Activated CD8-positive, alpha-beta T cell treated with anti-CD3 and anti-CD28 coated beads for 36 hours (primary cell): ENCODE measurements at regions of chr7 and their contacts with region 1.

Region 1: DNA sequence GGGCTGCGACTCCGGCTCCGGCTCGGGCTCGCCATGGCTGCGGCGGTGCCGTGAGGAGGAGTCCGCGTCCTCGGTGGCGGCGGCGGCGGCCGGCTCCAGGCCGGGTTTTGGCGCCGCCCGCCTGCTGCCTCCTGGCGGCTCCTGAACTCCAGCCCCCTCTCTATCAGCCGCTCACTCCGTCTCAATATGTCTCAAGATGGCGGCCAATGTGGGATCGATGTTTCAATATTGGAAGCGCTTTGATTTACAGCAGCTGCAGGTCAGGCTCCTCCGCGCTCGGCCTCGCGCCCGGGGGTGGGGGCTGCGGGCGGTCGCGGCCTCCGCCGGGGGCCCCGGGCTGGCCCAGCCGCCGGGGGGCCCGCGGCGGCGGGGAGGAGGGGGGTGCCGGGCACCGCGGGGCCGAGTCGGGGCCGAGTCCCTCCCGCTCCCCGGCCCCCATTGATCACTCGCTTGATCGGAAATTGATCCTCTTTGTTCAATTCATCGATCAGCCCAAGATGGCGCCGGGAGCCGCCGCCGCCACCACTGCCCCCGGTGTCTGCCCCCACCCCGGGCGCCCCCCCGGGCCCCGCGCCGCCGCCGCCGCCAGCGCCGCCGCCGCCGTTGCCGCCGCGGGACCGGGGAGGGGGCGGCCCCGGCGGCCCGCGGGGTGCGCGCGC is 1.5 kb upstream of the CUX1 start:
- DNase-seq: peak; percentile 76
- ATAC-seq: peak; percentile 78
- H3K4me3 Mint-ChIP-seq: peak overlapping the region; percentile 75
- H3K27ac Mint-ChIP-seq: peak overlapping the region; percentile 83
- H3K4me1 Mint-ChIP-seq: peaks cover 24% of the 10 kb centered on the region
- H3K27me3 Mint-ChIP-seq: no peaks in the 10 kb centered on the region
- CTCF ChIP-seq: no peak

Region 2: GRCh38 chr7:101688183-101688831 is 127.7 kb before region 1 on chr7:
- CTCF ChIA-PET with region 1: interaction called, 5 read pairs
- POLR2A ChIA-PET with region 1: no interaction called
- intact Hi-C with region 1: loop called (anchors 2 kb)
- DNase-seq: peak; percentile 87
- ATAC-seq: peak; percentile 96
- H3K4me3 Mint-ChIP-seq: no peak overlapping the region
- H3K27ac Mint-ChIP-seq: no peak overlapping the region
- H3K4me1 Mint-ChIP-seq: no peaks in the 10 kb centered on the region
- H3K27me3 Mint-ChIP-seq: no peaks in the 10 kb centered on the region
- CTCF ChIP-seq: peak; percentile 98

Region 3: DNA sequence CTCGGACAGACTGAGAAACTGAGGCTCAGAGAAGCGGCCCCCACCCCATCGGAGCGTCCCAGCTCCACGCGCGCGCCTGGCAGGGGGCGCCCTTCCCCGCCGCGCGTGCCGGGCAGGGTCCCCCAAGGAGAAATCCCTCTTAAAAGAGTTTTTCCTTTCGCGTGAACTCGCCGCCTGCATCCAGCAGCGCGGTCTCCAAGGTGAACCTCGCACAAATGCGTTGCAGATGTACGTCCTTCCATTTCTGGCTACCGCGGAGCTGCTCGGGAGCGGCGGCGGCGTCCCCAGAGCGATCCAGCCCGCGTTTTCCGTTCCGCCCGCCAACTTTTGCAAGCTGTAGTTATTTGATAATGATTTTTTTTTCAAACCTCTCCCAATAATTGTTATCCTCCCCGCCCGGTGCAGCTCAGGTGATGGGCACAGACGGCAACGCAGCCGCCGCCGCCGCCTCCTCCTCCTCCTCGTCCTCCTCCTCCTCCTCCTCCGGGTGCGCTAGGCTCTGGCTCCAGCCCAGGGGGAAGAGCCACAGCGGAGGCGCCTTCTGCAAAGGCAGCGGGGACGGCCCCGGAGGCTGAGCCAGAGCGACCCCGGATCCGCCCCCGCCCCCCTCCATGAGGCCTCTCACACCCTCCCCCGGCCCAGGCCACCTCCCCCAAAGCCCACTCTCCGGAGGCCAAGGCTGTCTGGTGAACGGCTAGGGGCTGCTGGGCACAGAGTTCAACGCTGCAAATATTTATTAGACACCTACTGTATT is 72.5 kb before region 1 on chr7:
- CTCF ChIA-PET with region 1: interaction called, 10 read pairs
- POLR2A ChIA-PET with region 1: interaction called, 5 read pairs
- intact Hi-C with region 1: loop called (anchors 5 kb)
- DNase-seq: peak; percentile 76
- ATAC-seq: peak; percentile 67
- H3K4me3 Mint-ChIP-seq: peak overlapping the region; percentile 62
- H3K27ac Mint-ChIP-seq: no peak overlapping the region
- H3K4me1 Mint-ChIP-seq: peaks cover 28% of the 10 kb centered on the region
- H3K27me3 Mint-ChIP-seq: no peaks in the 10 kb centered on the region
- CTCF ChIP-seq: peak; percentile 69

Region 4: DNA sequence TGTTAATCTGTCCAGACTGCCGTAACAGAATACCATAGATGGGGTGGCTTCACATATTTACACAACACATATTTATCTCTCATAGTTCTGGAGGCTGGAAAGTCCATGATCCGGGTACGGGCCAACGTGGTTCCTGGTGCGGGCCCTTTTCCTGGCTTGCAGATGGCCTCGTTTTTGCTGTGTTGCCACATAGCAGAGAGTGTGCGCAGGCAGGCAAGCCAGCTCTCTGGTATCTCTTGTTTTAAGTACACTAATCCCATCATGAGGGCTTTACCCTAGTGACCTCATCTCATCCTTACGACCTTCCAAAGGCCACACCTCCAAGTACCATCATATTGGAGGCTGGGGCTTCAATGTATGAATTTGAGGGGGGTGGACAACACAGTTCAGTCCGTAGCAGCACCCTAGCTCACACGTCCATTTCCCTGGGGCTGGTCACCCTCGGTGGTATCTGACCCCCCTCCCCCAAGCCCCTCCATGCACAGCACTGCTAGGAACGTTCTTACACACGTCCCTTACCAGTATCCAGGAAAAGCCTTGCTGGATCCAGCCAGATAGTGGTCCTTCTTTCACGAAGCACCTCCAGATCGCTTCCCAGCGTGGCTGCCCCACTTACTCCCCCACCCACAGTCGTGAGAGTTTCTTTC is 23.0 kb after region 1 on chr7:
- CTCF ChIA-PET with region 1: no interaction called
- POLR2A ChIA-PET with region 1: no interaction called
- intact Hi-C with region 1: no loop called
- DNase-seq: no peak
- ATAC-seq: no peak
- H3K4me3 Mint-ChIP-seq: no peak overlapping the region
- H3K27ac Mint-ChIP-seq: no peak overlapping the region
- H3K4me1 Mint-ChIP-seq: peaks cover 11% of the 10 kb centered on the region
- H3K27me3 Mint-ChIP-seq: no peaks in the 10 kb centered on the region
- CTCF ChIP-seq: no peak

Region 5: GRCh38 chr7:101856473-101857357 is 40.8 kb after region 1 on chr7:
- CTCF ChIA-PET with region 1: no interaction called
- POLR2A ChIA-PET with region 1: no interaction called
- intact Hi-C with region 1: loop called (anchors 2 kb)
- DNase-seq: peak; percentile 92
- ATAC-seq: peak; percentile 93
- H3K4me3 Mint-ChIP-seq: peak overlapping the region; percentile 81
- H3K27ac Mint-ChIP-seq: peak overlapping the region; percentile 96
- H3K4me1 Mint-ChIP-seq: peaks cover 41% of the 10 kb centered on the region
- H3K27me3 Mint-ChIP-seq: no peaks in the 10 kb centered on the region
- CTCF ChIP-seq: peak; percentile 55